Calu3 (cell line): ENCODE measurements at regions of chr18 and their contacts with region 1.

Region 1: DNA sequence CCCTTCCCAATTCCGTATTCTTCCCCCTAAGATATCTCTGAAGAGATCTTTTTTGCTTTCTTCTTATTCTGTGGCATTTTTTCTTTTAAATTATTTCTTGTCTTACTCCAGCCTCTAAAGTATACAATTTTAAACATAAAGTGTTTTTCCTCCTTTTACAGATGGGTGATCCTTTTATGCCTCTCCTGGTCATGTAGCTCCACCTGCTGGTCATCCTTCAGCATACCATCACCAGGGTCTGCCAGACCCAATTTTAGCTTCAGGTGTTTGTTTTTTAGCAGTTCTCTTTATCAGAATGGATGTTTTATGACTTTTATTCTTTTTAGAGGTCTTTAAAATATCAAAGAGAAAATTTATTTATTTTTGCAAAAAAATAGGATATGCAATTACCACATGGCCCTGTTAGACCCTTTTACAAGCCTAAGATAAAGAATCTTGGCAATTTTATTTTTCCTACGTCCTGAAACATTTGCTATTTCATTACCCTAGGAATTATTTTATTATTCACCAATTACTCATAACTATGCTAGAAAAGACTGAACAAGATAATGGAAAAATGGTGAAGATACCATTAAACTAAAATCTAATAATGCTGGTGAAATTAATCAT is 55.5 kb downstream of the PIGN start:
- DNase-seq: peak; percentile 72
- H3K4me3 Mint-ChIP-seq: no peak overlapping the region
- H3K27ac Mint-ChIP-seq: no peak overlapping the region
- H3K4me1 Mint-ChIP-seq: no peaks in the 10 kb centered on the region
- H3K27me3 Mint-ChIP-seq: no peaks in the 10 kb centered on the region
- CTCF ChIP-seq: peak; percentile 85

Region 2: DNA sequence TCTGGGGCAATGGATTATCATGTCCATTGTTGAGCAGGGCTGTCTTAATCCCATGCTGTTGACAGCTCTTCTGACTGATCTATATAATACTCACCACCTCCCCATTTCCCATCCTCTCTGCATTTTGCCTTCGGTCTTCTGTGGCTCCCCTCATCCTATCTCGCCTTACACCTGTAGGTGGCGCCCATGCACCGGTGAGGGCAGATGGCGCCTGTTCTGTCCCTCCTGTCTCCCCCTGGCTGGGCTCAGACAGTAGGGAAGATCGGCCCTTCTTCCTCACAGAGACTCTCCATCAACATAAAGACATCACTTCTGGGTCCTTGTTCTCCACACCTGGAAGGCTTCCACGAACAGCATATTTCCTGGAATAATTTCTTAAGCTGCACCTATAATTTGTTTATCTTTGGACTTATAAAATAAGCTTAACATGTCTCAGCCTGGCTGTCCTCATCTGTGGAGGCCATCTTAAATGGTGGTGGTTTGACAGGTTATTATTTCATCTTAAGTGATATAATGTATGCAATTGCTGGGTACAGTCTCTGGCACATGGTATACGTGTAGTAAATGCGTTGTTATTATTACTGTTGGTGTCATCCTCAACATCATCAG is 809.0 kb before region 1 on chr18:
- CTCF ChIA-PET with region 1: no interaction called
- intact Hi-C with region 1: loop called (anchors 1 kb)
- DNase-seq: peak; percentile 87
- H3K4me3 Mint-ChIP-seq: no peak overlapping the region
- H3K27ac Mint-ChIP-seq: no peak overlapping the region
- H3K4me1 Mint-ChIP-seq: no peaks in the 10 kb centered on the region
- H3K27me3 Mint-ChIP-seq: no peaks in the 10 kb centered on the region
- CTCF ChIP-seq: peak; percentile 96

Region 3: DNA sequence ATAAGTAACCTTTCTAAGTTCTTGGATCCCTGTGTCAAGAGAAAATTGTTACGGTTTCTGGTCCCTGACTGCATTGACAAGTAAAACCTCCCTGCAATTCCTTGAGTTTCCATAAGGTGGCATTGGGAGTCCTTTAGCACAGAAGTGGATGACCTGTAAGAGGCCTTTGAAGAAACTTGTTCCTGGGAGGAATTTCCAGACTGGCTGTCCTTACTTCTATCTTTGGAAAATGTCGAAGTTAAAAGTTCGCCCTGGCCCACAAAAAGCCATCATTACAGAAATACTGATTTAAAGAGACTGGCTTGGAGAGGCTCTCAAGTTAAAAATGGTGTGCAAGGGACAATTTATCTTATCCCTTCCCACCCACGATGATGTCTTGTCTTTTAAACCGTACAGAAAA is 579.8 kb before region 1 on chr18:
- CTCF ChIA-PET with region 1: no interaction called
- intact Hi-C with region 1: loop called (anchors 1 kb)
- DNase-seq: peak; percentile 66
- H3K4me3 Mint-ChIP-seq: no peak overlapping the region
- H3K27ac Mint-ChIP-seq: no peak overlapping the region
- H3K4me1 Mint-ChIP-seq: no peaks in the 10 kb centered on the region
- H3K27me3 Mint-ChIP-seq: no peaks in the 10 kb centered on the region
- CTCF ChIP-seq: peak; percentile 69

Region 4: GRCh38 chr18:61583548-61583947 is 547.9 kb before region 1 on chr18:
- CTCF ChIA-PET with region 1: interaction called, 5 read pairs
- intact Hi-C with region 1: loop called (anchors 1 kb)
- DNase-seq: no peak
- H3K4me3 Mint-ChIP-seq: no peak overlapping the region
- H3K27ac Mint-ChIP-seq: no peak overlapping the region
- H3K4me1 Mint-ChIP-seq: peaks cover 12% of the 10 kb centered on the region
- H3K27me3 Mint-ChIP-seq: peaks cover 31% of the 10 kb centered on the region
- CTCF ChIP-seq: no peak

Region 5: DNA sequence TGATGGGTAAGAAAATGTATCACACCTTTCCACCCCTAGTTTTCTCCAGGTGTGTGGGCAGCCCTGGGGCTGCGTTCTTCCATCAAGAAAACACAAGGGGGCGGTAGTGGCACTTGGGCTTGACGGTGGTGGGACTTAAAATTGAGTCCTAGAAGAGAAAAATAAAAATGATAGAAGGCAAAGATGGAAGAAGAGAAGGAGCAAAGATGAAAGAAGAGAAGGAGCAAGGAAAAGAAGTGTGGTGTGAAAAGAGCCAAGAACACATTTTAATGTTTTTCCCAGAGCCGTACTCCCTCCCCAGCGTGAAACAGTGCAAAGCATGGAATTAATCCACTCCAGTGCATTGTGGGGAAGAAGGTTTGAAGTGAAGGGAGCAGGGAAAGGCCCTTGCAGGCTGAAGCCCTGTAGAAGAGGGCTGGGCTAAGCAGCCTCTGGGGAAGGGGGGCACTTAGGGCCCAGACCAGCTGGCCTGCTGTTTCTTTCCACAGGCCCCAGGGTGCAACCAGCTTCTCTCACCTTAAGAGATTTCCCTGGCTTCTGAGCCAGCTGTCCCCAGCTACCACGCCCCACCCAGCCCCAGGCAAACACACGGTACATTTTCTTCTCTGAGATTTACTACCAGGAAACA is 495.4 kb before region 1 on chr18:
- CTCF ChIA-PET with region 1: interaction called, 9 read pairs
- intact Hi-C with region 1: loop called (anchors 1 kb)
- DNase-seq: peak; percentile 68
- H3K4me3 Mint-ChIP-seq: no peak overlapping the region
- H3K27ac Mint-ChIP-seq: no peak overlapping the region
- H3K4me1 Mint-ChIP-seq: peaks cover 9% of the 10 kb centered on the region
- H3K27me3 Mint-ChIP-seq: no peaks in the 10 kb centered on the region
- CTCF ChIP-seq: peak; percentile 82

Region 6: GRCh38 chr18:61917818-61918217 is 213.6 kb before region 1 on chr18:
- CTCF ChIA-PET with region 1: no interaction called
- intact Hi-C with region 1: loop called (anchors 10 kb)
- DNase-seq: no peak
- H3K4me3 Mint-ChIP-seq: no peak overlapping the region
- H3K27ac Mint-ChIP-seq: no peak overlapping the region
- H3K4me1 Mint-ChIP-seq: no peaks in the 10 kb centered on the region
- H3K27me3 Mint-ChIP-seq: no peaks in the 10 kb centered on the region
- CTCF ChIP-seq: no peak

Region 7: DNA sequence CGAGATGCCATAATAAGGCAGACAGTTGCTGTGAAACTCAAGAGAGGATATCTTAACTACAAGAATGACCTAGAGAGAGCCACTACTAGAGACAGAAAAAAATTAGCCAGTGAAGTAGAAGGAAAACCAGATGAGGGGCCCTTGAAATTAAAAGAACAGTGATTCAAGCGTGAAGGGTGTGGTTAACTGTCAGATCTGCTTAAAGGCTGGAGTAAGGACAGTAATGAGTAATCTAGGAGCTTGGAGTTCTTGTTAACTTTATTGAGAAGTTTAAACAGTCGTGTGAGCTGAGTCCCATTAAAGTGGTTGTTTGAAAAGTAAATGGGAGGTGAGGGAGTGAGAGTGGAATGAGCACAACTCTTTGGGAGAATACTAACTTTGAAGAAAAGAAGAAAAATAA is 34.2 kb after region 1 on chr18:
- CTCF ChIA-PET with region 1: no interaction called
- intact Hi-C with region 1: no loop called
- DNase-seq: no peak
- H3K4me3 Mint-ChIP-seq: no peak overlapping the region
- H3K27ac Mint-ChIP-seq: no peak overlapping the region
- H3K4me1 Mint-ChIP-seq: peaks cover 11% of the 10 kb centered on the region
- H3K27me3 Mint-ChIP-seq: no peaks in the 10 kb centered on the region
- CTCF ChIP-seq: no peak